ENCODE measurements at regions of chr1 and their contacts with region 1.

Region 1: DNA sequence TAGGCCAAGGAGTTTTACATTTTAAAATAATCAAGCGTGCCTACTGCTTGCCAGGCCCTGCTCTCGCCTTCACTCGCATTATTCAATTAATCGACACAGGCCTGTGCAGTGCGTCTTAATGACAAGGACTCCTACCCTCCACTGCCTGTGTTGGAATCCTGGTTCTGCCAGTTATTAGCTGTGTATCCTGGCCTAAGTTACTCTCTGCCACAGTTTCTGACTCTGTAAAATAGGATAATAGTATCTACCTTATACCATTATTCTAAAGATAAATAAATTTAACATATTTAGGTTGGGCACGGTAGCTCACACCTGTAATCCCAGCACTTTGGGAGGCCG is 46.8 kb downstream of the AZIN2 start:
- DNase-seq: peak in 1 of 2 donors; percentile 19
- H3K4me3 ChIP-seq: peak overlapping the region; percentile 64 to 79 (median 76)
- H3K27ac ChIP-seq: peak overlapping the region; percentile 88 to 91
- H3K4me1 ChIP-seq: peaks cover 0 to 5% of the 10 kb centered on the region in 2 donors
- H3K27me3 ChIP-seq: no peaks in the 10 kb centered on the region
- CTCF ChIP-seq: no peak
- POLR2A ChIP-seq: no peak

Region 2: DNA sequence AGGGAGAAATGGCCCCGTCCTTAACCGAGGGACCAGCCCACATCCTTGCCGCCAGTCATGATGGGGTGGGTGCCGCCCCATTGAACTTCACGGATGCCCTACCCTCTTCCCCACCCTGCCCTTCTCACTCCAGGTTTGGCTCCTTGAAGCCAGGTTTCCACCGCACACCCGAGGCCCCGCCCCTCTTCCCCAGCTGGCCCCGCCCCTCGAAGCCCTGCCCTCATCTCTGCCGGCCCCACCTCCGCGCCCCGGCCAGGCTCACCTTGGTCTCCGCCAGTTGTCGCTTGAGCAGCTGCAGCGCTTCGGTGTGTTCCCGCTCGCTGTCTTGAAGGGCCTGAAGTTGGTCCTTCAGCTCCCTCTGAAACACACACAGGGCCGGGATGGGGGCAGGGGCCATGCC is 37.4 kb after region 1 on chr1:
- intact Hi-C with region 1: loop called (anchors 1 kb)
- DNase-seq: no peak
- H3K4me3 ChIP-seq: no peak overlapping the region
- H3K27ac ChIP-seq: no peak overlapping the region
- H3K4me1 ChIP-seq: no peaks in the 10 kb centered on the region
- H3K27me3 ChIP-seq: no peaks in the 10 kb centered on the region
- CTCF ChIP-seq: no peak
- POLR2A ChIP-seq: no peak

Region 3: DNA sequence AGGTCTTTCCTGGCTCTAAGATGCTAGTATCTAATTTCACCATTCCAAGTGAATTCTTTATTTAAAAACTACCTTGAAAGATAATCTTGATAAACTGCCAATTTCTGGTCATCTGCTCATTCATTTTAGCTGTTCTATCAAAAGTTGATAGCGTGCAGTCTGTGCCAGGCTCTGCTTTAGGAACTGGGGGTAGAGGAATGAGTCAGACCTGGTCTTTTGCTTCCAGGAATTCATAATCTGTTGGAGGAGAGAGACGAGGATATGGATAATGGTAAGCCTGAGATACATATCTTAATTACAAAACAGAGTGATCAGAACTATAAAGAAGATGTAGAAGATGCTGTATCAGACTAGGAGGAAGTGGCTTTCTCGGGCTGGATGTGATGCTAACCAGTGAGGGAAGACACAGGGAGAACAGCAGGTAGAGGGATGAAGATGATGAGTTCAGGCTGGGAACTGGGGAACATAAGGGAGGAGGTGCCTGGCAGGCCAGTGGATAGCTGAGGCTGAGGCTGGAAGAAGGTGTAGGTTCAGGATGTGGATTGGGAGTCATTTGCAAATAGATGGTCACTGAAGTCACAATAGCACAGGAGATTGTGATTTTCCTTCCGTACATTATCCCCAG is 315.4 kb after region 1 on chr1:
- intact Hi-C with region 1: no loop called
- DNase-seq: no peak
- H3K4me3 ChIP-seq: no peak overlapping the region
- H3K27ac ChIP-seq: no peak overlapping the region
- H3K4me1 ChIP-seq: no peaks in the 10 kb centered on the region
- H3K27me3 ChIP-seq: no peaks in the 10 kb centered on the region
- CTCF ChIP-seq: no peak
- POLR2A ChIP-seq: no peak